Mammary epithelial cell (primary cell): ENCODE measurements at regions of chr2 and their contacts with region 1.

Region 1: DNA sequence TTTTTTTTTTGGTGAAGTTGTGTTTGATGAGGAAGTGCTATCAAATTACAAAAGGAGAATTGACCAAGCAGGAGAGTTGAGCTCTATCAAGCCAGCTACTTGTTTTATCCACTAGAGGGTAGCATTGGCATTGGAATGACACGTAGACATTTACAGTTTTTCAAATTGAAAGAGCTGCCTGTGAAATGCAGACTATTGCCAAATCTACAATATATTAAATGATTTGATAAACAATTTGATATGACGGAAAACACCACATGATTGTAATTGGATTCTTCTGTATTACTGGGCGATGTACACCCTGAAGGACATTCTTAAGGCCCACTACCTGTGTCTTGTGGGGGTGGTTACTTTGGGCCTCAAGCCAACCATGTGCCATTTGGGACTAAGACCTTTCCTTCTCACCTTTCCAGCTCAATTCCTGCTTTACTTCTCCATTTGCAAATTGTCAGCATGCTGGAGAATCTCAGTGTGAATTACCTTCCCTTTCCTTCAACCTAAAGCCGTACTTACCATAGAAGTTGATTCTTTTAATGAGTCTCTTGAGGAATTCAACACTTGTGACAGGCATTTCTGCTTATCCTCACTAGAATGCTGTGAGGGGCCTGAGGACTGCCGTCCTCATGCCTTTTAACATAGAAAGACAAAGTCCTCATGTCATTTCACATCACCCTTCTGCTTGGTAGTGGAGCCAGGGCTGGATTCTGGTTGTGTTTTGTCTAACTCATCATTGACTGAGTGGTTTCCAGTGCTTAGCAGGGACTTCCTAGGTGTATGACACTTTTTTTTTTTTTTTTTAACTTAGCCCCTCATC is 134.8 kb upstream of the THUMPD2 start:
- DNase-seq: peak; percentile 58
- H3K4me3 ChIP-seq: no peak overlapping the region
- H3K27ac ChIP-seq: no peak overlapping the region
- H3K4me1 ChIP-seq: peaks cover 4% of the 10 kb centered on the region
- H3K27me3 ChIP-seq: no peaks in the 10 kb centered on the region
- CTCF ChIP-seq: peak; percentile 68 to 73

Region 2: DNA sequence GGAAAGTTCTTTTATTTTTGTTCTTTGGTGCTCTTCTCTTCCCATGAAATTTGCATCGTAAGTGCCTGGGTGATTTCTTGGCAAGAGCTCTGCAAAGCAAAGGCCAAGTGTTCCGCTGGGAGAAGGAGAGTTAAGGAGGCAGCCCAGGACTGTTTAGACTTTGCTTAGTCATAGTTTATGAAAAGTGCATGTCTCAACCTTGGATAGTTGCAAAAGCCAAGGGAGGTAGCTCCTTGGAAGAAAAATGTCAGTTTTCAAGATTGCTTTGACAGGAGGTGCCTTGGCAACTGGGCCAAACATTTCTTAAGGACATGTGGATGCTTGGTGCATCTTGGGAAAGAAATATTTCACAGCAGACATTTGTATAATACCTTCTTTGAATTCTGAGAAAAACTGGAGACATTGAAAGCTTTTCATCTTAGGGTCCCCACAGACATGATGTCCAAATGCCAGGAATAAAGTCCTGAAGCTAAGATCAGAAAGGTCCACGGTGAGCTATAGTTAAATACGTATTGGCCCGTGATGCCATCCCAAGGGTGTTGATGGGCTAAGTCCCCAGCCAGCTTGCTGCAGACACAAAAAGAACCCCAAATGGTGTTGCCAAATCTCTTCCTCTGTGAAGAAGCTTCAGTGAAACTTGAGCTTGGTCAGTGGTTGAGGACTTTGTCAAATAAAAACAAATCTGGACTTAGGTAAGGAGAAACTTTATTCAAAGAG is 38.5 kb before region 1 on chr2:
- CTCF ChIA-PET with region 1: no interaction called
- dilution Hi-C with region 1: no loop called
- in situ Hi-C with region 1: no loop called
- intact Hi-C with region 1: no loop called
- DNase-seq: peak; percentile 81
- H3K4me3 ChIP-seq: no peak overlapping the region
- H3K27ac ChIP-seq: peak overlapping the region; percentile 37
- H3K4me1 ChIP-seq: peaks cover 29% of the 10 kb centered on the region
- H3K27me3 ChIP-seq: no peaks in the 10 kb centered on the region
- CTCF ChIP-seq: no peak

Region 3: DNA sequence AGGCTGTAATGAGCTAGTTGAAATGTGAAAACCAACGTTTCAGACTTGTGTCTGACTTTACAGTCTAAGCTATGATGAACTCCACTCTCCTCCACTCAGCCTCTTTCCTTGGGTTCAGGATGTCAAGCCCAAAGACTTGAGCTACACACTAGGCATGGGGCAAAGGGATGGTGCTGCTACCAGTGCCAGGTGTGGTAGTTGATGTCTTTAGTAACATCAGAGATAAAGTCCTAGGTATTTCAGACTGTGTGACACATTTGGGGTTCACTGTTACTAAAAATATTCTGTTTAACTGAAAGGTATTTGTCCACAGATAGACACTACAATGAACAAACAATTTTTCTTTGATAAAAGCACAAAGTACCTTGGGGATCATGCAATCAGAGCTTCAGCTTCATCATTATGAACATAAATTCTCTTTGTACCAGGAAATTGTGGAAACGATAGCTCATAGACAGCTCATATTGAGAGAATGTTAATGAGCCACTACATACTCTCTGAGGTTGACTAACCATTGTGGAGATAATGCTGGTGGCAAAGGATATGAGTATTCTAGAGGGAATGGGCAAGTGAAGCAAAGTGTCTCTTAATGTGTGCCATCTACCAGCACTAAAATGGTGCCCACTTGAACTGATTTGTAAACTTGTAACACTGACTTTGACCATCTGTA is 118.9 kb after region 1 on chr2:
- CTCF ChIA-PET with region 1: no interaction called
- dilution Hi-C with region 1: no loop called
- in situ Hi-C with region 1: no loop called
- intact Hi-C with region 1: loop called (anchors 1 kb)
- DNase-seq: peak; percentile 91
- H3K4me3 ChIP-seq: no peak overlapping the region
- H3K27ac ChIP-seq: peak overlapping the region; percentile 78
- H3K4me1 ChIP-seq: peaks cover 45% of the 10 kb centered on the region
- H3K27me3 ChIP-seq: no peaks in the 10 kb centered on the region
- CTCF ChIP-seq: no peak

Region 4: GRCh38 chr2:40212804-40213470 is 299.1 kb after region 1 on chr2:
- CTCF ChIA-PET with region 1: no interaction called
- dilution Hi-C with region 1: no loop called
- in situ Hi-C with region 1: loop called in 1 of 2 experiments (anchors 25 kb)
- intact Hi-C with region 1: loop called (anchors 1 kb)
- DNase-seq: no peak
- H3K4me3 ChIP-seq: no peak overlapping the region
- H3K27ac ChIP-seq: no peak overlapping the region
- H3K4me1 ChIP-seq: no peaks in the 10 kb centered on the region
- H3K27me3 ChIP-seq: no peaks in the 10 kb centered on the region
- CTCF ChIP-seq: peak; percentile 27 to 53

Region 5: DNA sequence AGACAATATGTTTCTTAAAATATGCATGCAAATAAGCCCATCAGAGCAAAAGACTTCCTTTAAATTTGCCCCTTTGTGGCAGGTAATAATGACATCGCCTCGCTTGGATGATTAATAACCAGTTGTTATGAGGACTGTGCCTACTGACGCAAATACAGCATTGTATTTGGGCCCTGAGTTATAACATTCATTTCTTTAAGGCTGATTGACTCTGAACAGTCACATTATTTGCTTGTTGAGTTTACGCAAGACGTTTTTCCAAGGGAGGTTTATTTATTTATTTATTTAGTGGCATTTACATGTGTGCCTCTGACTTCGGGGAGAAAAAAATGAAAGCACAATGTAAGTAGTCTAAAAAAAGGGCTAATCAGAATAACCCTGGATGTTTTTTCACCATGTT is 449.8 kb after region 1 on chr2:
- CTCF ChIA-PET with region 1: no interaction called
- dilution Hi-C with region 1: no loop called
- in situ Hi-C with region 1: no loop called
- intact Hi-C with region 1: loop called (anchors 1 kb)
- DNase-seq: no peak
- H3K4me3 ChIP-seq: no peak overlapping the region
- H3K27ac ChIP-seq: peak overlapping the region; percentile 51
- H3K4me1 ChIP-seq: peaks cover 13% of the 10 kb centered on the region
- H3K27me3 ChIP-seq: no peaks in the 10 kb centered on the region
- CTCF ChIP-seq: no peak

Region 6: DNA sequence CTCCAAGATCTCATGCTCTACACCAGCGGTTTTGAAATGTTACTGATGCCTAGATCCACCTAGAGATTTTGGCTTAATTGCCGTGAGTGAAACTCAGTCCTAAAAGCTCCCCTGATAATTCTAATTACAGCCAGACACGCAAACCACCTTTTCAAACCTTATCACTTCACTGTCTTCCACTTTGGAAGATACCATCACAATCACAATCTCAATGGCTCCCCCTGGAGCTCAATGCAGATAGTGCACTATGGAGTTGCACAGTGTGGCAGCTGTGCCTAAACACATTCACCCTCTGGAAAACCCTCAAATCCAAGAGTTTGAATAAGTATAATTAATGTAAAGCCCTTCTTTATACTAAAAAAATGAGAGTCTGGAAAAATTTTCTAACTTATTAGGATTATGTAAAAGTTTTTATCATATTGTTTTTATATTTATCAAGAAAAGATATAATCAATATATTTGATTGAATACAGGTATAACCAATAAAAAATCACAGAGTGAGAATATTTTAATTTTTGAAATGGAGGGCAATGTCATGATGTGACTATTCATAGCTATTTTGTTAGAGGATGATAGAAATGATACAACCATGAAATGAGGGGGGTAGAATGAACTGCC is 640.9 kb after region 1 on chr2:
- CTCF ChIA-PET with region 1: interaction called, 13 read pairs
- dilution Hi-C with region 1: no loop called
- in situ Hi-C with region 1: loop called (anchors 5 to 25 kb)
- intact Hi-C with region 1: loop called (anchors 1 kb)
- DNase-seq: peak; percentile 46
- H3K4me3 ChIP-seq: no peak overlapping the region
- H3K27ac ChIP-seq: no peak overlapping the region
- H3K4me1 ChIP-seq: no peaks in the 10 kb centered on the region
- H3K27me3 ChIP-seq: no peaks in the 10 kb centered on the region
- CTCF ChIP-seq: peak; percentile 75 to 90

Region 7: GRCh38 chr2:41400088-41400665 is 1486.3 kb after region 1 on chr2:
- CTCF ChIA-PET with region 1: no interaction called
- dilution Hi-C with region 1: no loop called
- in situ Hi-C with region 1: no loop called
- intact Hi-C with region 1: loop called (anchors 10 kb)
- DNase-seq: no peak
- H3K4me3 ChIP-seq: no peak overlapping the region
- H3K27ac ChIP-seq: no peak overlapping the region
- H3K4me1 ChIP-seq: no peaks in the 10 kb centered on the region
- H3K27me3 ChIP-seq: no peaks in the 10 kb centered on the region
- CTCF ChIP-seq: peak; percentile 11 to 20